ENCODE measurements at regions of chr2 and their contacts with region 1.

Region 1: DNA sequence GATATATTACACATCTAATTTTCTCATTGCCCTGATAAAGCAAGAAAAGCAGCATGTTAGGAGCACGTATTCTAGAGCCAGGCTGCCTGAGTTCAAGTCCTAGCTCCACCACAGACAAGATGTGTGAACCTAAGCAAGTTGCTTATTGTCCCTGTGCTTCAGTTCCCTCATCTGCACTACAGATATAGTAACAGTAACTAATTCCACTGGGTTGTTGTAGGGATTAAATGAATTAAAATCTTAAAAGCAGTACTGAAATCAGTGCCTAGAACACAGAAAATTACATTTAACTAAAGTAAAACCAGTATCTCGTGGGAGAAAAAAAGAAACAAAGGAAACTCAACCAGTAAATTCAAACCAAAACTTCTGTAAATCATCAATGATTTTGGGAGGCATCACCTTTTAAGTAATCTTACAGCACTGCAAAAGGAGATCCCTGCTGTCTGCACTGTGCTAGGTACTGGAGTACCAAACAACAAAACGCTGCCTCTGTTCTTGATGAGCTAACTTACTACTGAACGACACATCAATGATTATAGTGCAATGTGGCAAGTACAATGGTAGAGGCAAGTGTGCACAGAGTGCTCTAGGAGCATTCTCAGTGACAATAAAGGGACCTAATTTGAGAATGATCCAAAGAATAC is 7.9 kb downstream of the MAP3K2 start:
- DNase-seq: no peak
- ATAC-seq: no peak
- H3K4me3 ChIP-seq: no peak overlapping the region
- H3K4me3 Mint-ChIP-seq: no peak overlapping the region
- H3K27ac ChIP-seq: no peak overlapping the region
- H3K27ac Mint-ChIP-seq: no peak overlapping the region
- H3K4me1 ChIP-seq: peaks cover 8 to 25% of the 10 kb centered on the region in 2 donors
- H3K4me1 Mint-ChIP-seq: peaks cover 60% of the 10 kb centered on the region
- H3K27me3 ChIP-seq: no peaks in the 10 kb centered on the region
- H3K27me3 Mint-ChIP-seq: no peaks in the 10 kb centered on the region
- CTCF ChIP-seq: no peak

Region 2: GRCh38 chr2:127348426-127349000 is 31.3 kb before region 1 on chr2:
- CTCF ChIA-PET with region 1: no interaction called
- POLR2A ChIA-PET with region 1: no interaction called
- intact Hi-C with region 1: loop called (anchors 5 kb)
- DNase-seq: peak; percentile 14
- ATAC-seq: no peak
- H3K4me3 ChIP-seq: peak overlapping the region in 1 of 5 experiments; percentile 45
- H3K4me3 Mint-ChIP-seq: peak overlapping the region; percentile 69
- H3K27ac ChIP-seq: peak overlapping the region in 1 of 2 donors; percentile 48
- H3K27ac Mint-ChIP-seq: peak overlapping the region; percentile 1
- H3K4me1 ChIP-seq: peaks cover 27 to 52% of the 10 kb centered on the region in 2 donors
- H3K4me1 Mint-ChIP-seq: peaks cover 69% of the 10 kb centered on the region
- H3K27me3 ChIP-seq: no peaks in the 10 kb centered on the region
- H3K27me3 Mint-ChIP-seq: no peaks in the 10 kb centered on the region
- CTCF ChIP-seq: no peak

Measured in B cell (primary cell).